Left lung (tissue), 14 donors: ENCODE measurements at regions of chr11 and their contacts with region 1.

Region 1: DNA sequence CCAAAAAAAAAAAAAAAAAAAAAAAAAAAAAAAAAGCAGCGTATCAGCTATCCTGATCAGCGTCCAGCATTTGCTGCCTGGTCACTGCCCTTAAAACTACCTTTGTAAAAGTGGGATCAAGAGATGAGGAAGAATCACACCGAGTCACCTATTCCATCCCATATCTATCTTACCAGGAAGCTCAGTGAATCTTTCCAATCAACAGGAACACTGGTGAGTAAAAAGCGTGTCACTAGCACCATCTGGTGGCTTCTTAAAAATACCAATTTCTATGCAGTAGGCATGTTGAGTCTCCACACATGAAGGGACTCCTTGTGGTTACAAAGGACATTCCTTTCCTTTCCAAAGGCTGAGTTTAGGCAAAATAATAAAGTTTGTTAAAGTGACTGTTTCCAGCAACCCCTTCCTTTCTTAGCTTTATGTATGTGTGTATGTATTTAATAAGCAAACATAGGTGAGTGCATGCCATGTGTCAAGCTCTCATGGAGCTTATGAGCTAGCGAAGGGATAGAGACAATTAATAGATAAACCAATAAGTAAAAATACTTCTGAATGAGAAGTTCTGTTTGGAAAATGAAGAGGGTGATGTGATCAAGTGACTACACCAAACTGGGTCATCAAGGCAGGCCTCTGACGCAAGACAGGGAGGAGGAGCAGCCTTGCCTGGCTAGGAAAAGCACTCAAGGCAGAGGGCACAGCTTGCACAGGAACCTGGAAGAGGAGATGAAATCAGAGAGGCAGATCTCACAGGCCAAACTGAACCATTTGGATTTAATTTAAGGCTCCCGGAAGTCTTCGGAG is 13.9 kb upstream of the TP53AIP1 start:
- DNase-seq: peak in 2 of 4 donors; percentile 62 to 79
- ATAC-seq: peak; percentile 95
- H3K4me3 ChIP-seq: no peak overlapping the region
- H3K27ac ChIP-seq: no peak overlapping the region
- H3K4me1 ChIP-seq: no peaks in the 10 kb centered on the region
- H3K27me3 ChIP-seq: no peaks in the 10 kb centered on the region
- CTCF ChIP-seq: peak; percentile 65

Region 2: GRCh38 chr11:128884703-128885338 is 71.8 kb before region 1 on chr11:
- intact Hi-C with region 1: loop called (anchors 2 to 10 kb)
- DNase-seq: peak in 3 of 4 donors; percentile 46 to 79 (median 47)
- ATAC-seq: peak; percentile 93
- H3K4me3 ChIP-seq: no peak overlapping the region
- H3K27ac ChIP-seq: no peak overlapping the region
- H3K4me1 ChIP-seq: no peaks in the 10 kb centered on the region
- H3K27me3 ChIP-seq: peaks cover 5 to 20% of the 10 kb centered on the region in 2 donors
- CTCF ChIP-seq: peak; percentile 69 to 92